AG04449 (cell line): ENCODE measurements at regions of chr12 and their contacts with region 1.

Region 1: GRCh38 chr12:1117970-1118563 is 127.0 kb downstream of the ERC1 start:
- DNase-seq: peak; percentile 19
- H3K4me3 ChIP-seq: no peak overlapping the region
- CTCF ChIP-seq: peak; percentile 83

Region 2: DNA sequence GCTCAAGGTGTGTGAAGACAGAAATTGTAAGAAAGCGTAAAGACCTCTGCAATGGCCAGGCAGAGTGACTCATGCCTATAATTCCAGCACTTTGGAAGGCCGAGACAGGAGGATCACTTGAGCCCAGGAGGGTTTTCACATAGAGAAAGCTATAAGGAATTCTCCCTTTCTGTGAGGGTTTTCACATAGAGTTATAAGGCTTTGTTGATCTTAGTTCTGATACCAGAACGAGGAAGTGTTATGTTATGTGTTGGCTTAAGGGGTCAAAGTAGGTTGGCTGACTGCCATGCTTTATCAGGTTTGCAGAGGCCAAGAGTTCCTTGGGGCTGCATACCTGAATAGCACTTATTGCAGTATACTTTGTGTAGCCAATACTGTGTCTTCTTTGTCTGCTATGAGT is 12.1 kb after region 1 on chr12:
- CTCF ChIA-PET with region 1: interaction called, 36 read pairs
- POLR2A ChIA-PET with region 1: no interaction called
- DNase-seq: no peak
- H3K4me3 ChIP-seq: no peak overlapping the region
- CTCF ChIP-seq: no peak

Region 3: GRCh38 chr12:1318327-1319031 is 200.4 kb after region 1 on chr12:
- CTCF ChIA-PET with region 1: interaction called, 12 read pairs
- POLR2A ChIA-PET with region 1: no interaction called
- DNase-seq: peak; percentile 29
- H3K4me3 ChIP-seq: no peak overlapping the region
- CTCF ChIP-seq: no peak

Region 4: DNA sequence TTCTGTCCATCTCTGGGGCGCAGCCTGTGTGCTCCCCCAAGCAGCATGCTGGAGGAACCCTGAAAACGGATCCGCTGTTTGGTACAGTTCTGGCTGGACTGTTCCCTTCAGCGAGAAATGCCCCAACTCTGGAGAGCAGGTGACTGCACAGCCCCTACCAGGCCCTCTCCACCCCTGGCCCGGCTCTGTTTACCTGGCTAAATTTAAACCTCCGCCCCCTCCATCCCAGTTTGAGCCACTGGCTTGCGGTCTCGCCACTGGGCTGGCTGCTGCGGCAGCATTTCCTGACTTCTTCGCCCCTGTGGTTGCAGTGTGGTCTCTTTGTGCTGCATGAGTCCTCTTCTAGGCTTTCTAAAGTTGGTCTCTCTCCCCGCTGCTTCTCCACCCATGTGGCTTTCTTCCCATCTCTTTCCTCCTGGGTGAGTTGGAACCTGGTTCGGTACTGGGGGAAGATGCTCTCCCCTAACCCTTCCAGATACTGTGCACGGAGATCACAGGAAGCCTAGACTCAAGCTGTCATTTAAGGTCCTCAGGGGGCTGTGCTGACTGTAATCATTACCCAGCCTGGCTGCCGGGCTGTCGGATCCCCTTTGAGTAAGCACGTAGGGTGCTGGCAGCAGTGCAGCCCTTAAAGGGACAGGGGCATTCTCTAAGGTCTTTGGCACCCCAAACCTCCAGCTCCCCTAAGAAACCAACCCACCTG is 415.7 kb after region 1 on chr12:
- CTCF ChIA-PET with region 1: interaction called, 20 read pairs
- POLR2A ChIA-PET with region 1: no interaction called
- DNase-seq: no peak
- H3K4me3 ChIP-seq: peak overlapping the region; percentile 28
- CTCF ChIP-seq: no peak

Region 5: GRCh38 chr12:1576410-1577241 is 458.6 kb after region 1 on chr12:
- CTCF ChIA-PET with region 1: interaction called, 207 read pairs
- POLR2A ChIA-PET with region 1: interaction called, 3 read pairs
- DNase-seq: no peak
- H3K4me3 ChIP-seq: no peak overlapping the region
- CTCF ChIP-seq: no peak

Region 6: DNA sequence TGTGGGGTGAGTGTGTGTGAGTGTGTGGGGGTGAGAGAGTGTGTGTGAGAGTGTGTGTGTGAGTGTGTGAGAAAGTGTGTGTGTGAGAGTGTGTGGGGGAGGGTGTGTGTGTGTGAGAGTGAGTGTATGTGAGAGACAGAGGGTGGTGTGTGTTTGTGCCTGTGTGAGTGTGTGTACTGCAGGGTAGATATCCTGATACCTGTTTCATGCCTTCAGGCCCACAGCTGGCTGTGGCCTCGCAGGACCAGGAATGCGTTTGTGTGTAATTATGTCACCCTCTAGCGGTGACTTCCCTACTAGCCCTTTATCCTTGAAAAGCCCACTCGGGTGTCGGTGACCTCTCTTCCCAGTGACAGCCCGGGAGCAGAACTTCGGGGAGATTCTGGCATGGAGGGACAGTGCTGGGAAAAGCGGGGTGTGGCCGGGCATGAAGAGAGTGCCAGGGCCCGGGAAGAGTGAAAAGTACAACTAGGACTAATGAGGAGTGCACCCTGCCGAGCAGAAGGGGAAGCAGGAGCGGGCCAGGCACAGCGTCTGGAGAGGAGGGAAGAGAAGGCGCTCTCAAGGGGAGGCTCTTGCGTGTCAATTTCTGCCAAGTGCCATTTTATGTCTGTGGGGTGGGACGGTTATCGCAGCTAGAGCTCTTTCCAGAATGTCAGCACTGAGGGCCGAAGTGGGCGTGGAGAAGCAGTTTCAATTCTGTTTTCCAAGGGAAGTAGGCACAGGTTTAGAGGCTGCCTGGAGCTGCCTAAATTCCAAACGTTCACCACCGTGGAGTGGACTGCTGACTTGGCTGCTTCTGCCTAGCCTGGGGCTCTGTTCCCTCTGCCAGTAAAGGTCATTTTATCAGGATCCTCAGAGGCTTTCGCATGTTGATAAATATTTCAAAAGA is 487.3 kb after region 1 on chr12:
- CTCF ChIA-PET with region 1: interaction called, 18 read pairs
- POLR2A ChIA-PET with region 1: no interaction called
- DNase-seq: no peak
- H3K4me3 ChIP-seq: peak overlapping the region; percentile 45
- CTCF ChIP-seq: peak; percentile 60